Endothelial cell of umbilical vein (primary cell): ENCODE measurements at regions of chr2 and their contacts with region 1.

Region 1: DNA sequence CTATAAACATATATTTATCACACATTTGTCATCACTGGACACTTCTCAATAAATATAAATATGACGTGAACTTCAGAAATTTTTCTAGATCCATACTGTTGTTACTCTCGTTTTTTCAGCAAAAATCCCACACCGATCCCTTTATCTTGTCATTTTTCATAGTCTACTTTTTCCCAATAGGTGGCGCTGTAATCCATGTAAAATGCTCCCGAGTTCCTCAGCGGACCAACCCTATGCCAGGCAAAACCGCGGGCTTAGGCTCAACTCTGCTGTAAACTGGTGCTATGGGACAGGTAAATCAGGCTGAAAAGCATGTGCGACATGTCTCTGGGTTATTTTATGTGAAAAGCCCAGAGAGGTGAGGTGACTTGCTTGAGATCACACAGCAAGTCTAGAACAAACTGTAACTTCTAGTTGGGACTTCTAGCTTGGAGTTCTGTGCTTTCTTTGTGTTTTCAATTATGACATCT is 104.0 kb downstream of the COBLL1 start:
- DNase-seq: peak; percentile 82
- H3K4me3 ChIP-seq: no peak overlapping the region
- H3K27ac ChIP-seq: no peak overlapping the region
- H3K4me1 ChIP-seq: peaks cover 8% of the 10 kb centered on the region
- H3K27me3 ChIP-seq: no peaks in the 10 kb centered on the region
- CTCF ChIP-seq: peak; percentile 48 to 61
- POLR2A ChIP-seq: no peak

Region 2: GRCh38 chr2:164910101-164910899 is 172.7 kb after region 1 on chr2:
- CTCF ChIA-PET with region 1: interaction called, 56 read pairs
- POLR2A ChIA-PET with region 1: no interaction called
- dilution Hi-C with region 1: no loop called
- intact Hi-C with region 1: loop called (anchors 1 kb)
- DNase-seq: peak; percentile 88
- H3K4me3 ChIP-seq: no peak overlapping the region
- H3K27ac ChIP-seq: peak overlapping the region; percentile 38
- H3K4me1 ChIP-seq: peaks cover 45% of the 10 kb centered on the region
- H3K27me3 ChIP-seq: no peaks in the 10 kb centered on the region
- CTCF ChIP-seq: no peak
- POLR2A ChIP-seq: no peak

Region 3: GRCh38 chr2:164917296-164917903 is 179.8 kb after region 1 on chr2:
- CTCF ChIA-PET with region 1: interaction called, 56 read pairs
- POLR2A ChIA-PET with region 1: no interaction called
- dilution Hi-C with region 1: no loop called
- intact Hi-C with region 1: loop called (anchors 1 kb)
- DNase-seq: peak; percentile 73
- H3K4me3 ChIP-seq: no peak overlapping the region
- H3K27ac ChIP-seq: no peak overlapping the region
- H3K4me1 ChIP-seq: peaks cover 18% of the 10 kb centered on the region
- H3K27me3 ChIP-seq: no peaks in the 10 kb centered on the region
- CTCF ChIP-seq: peak; percentile 21 to 46
- POLR2A ChIP-seq: no peak

Region 4: DNA sequence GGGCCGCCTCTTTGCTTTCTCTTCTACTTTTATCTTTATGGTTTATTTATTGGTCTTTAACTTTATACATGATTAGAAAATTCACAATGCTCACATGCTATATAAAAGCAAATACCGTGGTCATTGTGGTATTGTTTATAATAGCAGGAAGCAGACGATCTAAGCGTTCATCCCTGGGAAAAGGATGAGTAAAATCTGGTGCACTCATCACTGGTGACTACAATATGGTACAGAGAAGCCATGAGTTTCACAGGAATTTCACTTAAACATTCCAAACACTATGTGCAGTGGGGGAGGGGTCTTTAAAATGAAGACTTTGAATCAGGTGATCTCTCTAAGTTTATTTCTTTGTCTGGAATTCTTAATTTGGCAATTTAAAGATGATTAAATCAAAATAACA is 368.3 kb after region 1 on chr2:
- CTCF ChIA-PET with region 1: no interaction called
- POLR2A ChIA-PET with region 1: no interaction called
- dilution Hi-C with region 1: no loop called
- intact Hi-C with region 1: no loop called
- DNase-seq: no peak
- H3K4me3 ChIP-seq: no peak overlapping the region
- H3K27ac ChIP-seq: no peak overlapping the region
- H3K4me1 ChIP-seq: no peaks in the 10 kb centered on the region
- H3K27me3 ChIP-seq: no peaks in the 10 kb centered on the region
- CTCF ChIP-seq: no peak
- POLR2A ChIP-seq: no peak